Psoas muscle (tissue), 8 donors: ENCODE measurements at regions of chr6 and their contacts with region 1.

Region 1: DNA sequence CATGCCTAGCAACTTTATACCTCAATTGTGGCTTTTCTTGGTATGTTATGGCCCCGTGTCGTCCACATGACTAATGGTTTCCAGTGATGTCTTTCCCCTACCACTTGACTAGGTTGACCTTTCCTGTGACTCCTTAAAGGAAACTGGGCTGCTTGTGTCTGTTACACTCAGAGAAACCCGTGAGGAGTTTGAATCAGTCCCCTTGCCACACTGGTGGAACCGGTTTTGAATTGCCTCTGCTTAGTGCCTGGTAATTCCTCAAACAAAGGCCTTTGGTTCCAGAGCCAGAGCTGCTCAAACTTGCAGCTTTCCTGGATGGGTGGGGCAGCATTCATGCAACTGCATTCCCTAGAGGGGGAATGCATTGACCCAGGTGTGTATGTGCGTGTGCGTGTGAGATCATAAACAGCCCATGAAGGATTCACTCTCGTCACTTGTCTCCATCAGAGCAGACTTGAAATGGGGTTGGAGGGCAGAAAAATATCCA is 22.0 kb downstream of the ECT2L start:
- DNase-seq: no peak
- ATAC-seq: no peak
- H3K4me3 ChIP-seq: no peak overlapping the region
- H3K27ac ChIP-seq: no peak overlapping the region
- H3K4me1 ChIP-seq: no peaks in the 10 kb centered on the region
- H3K27me3 ChIP-seq: no peaks in the 10 kb centered on the region
- CTCF ChIP-seq: no peak

Region 2: DNA sequence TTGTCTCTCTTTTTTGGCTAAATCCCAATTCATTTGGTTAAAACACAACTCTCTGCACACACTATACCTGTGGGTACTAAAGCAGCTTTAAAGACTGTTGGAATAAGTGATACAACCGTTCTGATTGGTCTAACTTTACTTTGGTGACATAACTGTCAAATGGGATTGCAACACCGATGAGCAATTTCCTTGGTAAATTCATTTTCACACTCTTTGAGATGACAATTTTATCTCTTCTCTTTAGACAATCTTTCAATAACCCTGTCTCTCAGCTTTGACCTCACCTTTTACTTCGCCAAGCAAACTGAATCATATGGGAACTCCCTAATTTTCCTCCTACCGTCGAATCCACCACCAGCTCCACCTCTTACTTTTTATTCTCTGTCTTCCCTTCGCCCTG is 38.8 kb after region 1 on chr6:
- intact Hi-C with region 1: no loop called
- DNase-seq: no peak
- ATAC-seq: no peak
- H3K4me3 ChIP-seq: no peak overlapping the region
- H3K27ac ChIP-seq: no peak overlapping the region
- H3K4me1 ChIP-seq: no peaks in the 10 kb centered on the region
- H3K27me3 ChIP-seq: no peaks in the 10 kb centered on the region
- CTCF ChIP-seq: no peak

Region 3: DNA sequence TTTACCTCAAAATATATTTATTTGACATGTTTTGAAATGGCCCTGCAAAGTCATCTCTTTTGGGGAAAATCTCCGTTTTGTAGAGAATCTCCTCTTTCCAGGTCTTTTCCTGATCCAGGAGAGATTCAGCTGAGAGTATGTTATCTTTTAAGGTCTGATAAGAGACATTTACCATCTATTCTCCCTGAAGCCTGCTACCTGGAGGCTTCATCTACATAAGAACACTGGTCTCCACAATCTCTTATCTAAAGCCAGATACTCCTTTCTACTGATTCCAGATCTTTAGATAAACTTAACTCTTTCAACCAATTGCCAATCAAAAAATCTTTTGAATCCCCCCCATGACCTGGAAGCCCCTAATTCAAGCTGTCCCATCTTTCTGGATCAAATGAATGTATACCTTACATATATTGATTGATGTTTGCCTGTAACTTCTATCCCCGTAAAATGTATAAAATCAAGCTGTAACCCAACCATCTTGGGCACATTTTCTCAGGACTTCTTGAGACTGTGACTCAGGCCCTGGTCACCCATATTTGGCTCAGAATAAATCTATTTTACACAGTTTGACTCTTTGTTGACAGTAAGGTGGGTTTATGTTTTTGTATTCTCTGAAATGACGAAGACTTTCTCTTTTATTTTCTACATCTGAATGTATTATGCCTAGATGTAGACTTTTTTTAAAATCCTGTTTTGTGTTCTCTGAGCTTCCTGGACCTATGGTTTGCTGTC is 73.6 kb after region 1 on chr6:
- intact Hi-C with region 1: no loop called
- DNase-seq: no peak
- ATAC-seq: no peak
- H3K4me3 ChIP-seq: no peak overlapping the region
- H3K27ac ChIP-seq: no peak overlapping the region
- H3K4me1 ChIP-seq: no peaks in the 10 kb centered on the region
- H3K27me3 ChIP-seq: no peaks in the 10 kb centered on the region
- CTCF ChIP-seq: no peak

Region 4: DNA sequence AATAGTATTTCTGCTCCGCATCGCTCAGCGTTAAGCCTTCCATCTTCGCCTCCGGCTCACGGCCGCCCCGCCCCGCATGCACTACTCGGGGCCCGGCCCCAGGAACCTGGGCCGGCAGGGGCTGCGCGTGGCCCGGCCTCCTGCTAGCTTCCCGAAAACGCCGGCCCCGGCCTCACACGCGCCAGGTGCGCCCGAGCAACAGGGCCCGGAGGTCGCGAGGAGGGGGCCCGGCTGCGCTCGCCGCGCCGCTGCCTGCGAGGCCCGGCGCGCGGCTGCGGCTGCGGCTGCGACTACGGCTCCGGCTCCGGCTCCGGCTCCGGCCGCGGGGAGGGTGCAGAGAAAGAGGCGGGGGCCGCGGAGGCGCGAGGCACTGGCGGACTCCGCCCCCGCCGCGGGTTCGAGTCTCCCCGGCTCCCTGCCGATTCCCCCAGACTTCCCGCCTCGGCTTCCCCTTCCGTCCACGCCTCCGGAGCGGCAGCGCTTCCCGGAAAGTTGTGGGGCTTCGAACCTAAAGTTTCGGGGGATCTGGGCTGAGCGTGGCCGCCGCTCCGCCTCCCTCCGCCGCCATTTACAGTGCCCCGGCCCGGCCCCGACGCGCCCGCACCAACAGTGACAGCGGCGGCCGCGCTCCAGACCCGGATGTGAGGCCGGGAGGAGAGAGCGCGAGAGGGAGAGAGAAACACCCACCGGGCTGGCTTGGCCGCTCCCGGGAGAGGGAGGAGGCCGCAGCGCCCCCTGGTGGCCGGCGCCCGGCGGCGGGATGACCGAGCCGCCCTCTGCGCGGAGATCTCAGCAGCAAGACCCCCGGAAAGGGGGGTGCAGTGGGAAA is 170.0 kb after region 1 on chr6 and contains the start of gene REPS1:
- intact Hi-C with region 1: loop called (anchors 1 to 2 kb)
- DNase-seq: peak; percentile 91 to 95
- ATAC-seq: peak; percentile 99
- H3K4me3 ChIP-seq: peak within 1 kb of the TSS; percentile 81
- H3K27ac ChIP-seq: peak within 1 kb of the TSS; percentile 93
- H3K4me1 ChIP-seq: peaks cover 7% of the 10 kb centered on the region
- H3K27me3 ChIP-seq: no peaks in the 10 kb centered on the region
- CTCF ChIP-seq: peak; percentile 99
- total RNA-seq, gene REPS1: 16.3 to 23.9 (median 21.5) TPM

Region 5: DNA sequence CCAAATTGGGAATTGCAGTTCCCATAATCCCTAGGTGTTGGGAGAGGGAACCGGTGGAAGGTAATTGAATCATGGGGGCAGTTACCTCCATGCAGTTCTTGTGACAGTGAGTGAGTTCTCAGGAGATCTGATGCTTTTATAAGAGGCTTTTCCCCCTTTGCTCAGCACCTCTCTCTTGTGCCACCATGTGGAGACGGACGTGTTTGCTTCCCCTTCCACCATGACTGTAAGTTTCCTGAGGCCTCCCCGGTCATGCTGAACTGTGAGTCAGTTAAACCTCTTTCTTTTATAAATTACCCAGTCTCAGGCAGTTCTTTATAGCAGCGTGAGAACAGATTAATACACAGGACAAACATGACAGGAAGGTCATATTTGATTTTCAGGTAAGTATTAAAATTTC is 291.7 kb after region 1 on chr6:
- intact Hi-C with region 1: loop called in 1 of 2 experiments (anchors 10 kb)
- DNase-seq: no peak
- ATAC-seq: peak in 1 of 4 donors; percentile 68
- H3K4me3 ChIP-seq: no peak overlapping the region
- H3K27ac ChIP-seq: no peak overlapping the region
- H3K4me1 ChIP-seq: no peaks in the 10 kb centered on the region
- H3K27me3 ChIP-seq: no peaks in the 10 kb centered on the region
- CTCF ChIP-seq: peak; percentile 27

Region 6: GRCh38 chr6:139364302-139364981 is 546.6 kb after region 1 on chr6:
- intact Hi-C with region 1: loop called (anchors 5 kb)
- DNase-seq: no peak
- ATAC-seq: peak; percentile 46 to 82 (median 75)
- H3K4me3 ChIP-seq: no peak overlapping the region
- H3K27ac ChIP-seq: no peak overlapping the region
- H3K4me1 ChIP-seq: peaks cover 11% of the 10 kb centered on the region
- H3K27me3 ChIP-seq: no peaks in the 10 kb centered on the region
- CTCF ChIP-seq: peak; percentile 80